HCT116 (cell line): ENCODE measurements at regions of chr2 and their contacts with region 1.

Region 1: GRCh38 chr2:229586746-229587705 is 127.3 kb downstream of the DNER start:
- DNase-seq: peak; percentile 76
- ATAC-seq: peak; percentile 93
- H3K4me3 ChIP-seq: peak overlapping the region; percentile 38 to 53
- H3K27ac ChIP-seq: no peak overlapping the region
- H3K4me1 ChIP-seq: peaks cover 4 to 21% of the 10 kb centered on the region in 2 experiments; a peak in 3 of 4 replicates
- H3K27me3 ChIP-seq: no peaks in the 10 kb centered on the region
- CTCF ChIP-seq: peak; percentile 84 to 91 (median 84)
- POLR2A ChIP-seq: no peak
- RAD21 ChIP-seq: peak; percentile 96

Region 2: DNA sequence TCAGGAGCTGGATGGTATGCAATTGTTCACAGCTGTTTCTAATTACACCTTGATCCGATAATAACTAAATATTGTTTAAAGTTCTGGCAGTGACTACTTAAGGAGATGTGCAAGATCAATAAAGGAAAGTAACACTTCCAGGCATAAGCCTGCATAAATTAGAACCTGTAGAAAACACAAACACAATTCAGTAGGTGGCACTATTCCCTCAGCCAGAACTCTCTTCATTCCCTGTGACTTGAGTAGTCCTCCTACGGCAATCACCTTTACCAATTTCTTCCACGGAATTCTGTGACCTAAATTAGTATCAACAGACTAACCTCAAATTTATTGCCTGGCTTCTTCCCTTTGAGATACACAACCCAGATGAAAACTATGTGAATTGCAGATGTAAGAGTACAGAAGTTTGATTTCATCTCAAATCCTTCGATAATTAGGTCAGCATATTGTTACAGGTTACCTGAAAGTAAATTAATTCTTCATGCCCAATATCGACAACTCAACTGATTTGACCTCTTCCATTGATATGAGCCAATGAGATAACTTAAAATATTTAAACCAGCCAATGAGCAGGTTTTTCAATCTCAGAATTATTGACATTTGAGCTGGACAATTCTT is 453.8 kb before region 1 on chr2:
- CTCF ChIA-PET with region 1: interaction called, 11 read pairs
- POLR2A ChIA-PET with region 1: no interaction called
- RAD21 ChIA-PET with region 1: no interaction called
- intact Hi-C with region 1: loop called (anchors 1 kb)
- DNase-seq: peak; percentile 50
- ATAC-seq: peak; percentile 91
- H3K4me3 ChIP-seq: no peak overlapping the region
- H3K27ac ChIP-seq: no peak overlapping the region
- H3K4me1 ChIP-seq: no peaks in the 10 kb centered on the region
- H3K27me3 ChIP-seq: no peaks in the 10 kb centered on the region
- CTCF ChIP-seq: peak; percentile 51 to 67 (median 62)
- POLR2A ChIP-seq: no peak
- RAD21 ChIP-seq: peak; percentile 87

Region 3: DNA sequence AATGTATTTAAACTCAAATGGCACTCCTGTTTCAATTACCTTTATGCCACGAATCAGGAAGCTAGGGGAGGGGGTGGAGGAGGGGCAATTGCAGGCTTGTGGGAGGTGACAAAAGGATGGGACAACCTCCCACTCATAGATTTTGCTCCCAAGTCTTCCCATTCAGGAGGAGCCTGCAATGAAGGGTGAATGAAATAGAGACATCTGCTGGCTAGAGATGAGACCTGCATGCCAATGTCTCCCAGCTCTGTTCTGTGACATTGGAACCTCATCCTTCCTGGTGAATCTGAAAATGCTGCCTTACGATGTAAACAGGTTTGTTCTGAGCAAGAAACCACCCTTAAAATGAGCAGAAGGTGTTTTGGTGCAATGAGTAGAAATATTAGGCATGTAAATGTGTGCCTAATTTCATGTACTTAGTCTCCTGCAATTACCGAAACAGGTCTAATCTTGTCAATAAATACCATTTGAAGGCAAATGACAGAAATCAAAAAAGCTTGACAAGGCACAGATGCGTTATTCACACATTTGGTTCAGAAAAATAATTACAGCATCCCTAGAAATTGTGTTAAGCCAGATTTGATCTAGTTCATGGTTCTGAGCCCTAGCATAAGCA is 313.2 kb before region 1 on chr2:
- CTCF ChIA-PET with region 1: interaction called, 17 read pairs
- POLR2A ChIA-PET with region 1: interaction called, 3 read pairs
- RAD21 ChIA-PET with region 1: no interaction called
- intact Hi-C with region 1: loop called (anchors 2 kb)
- DNase-seq: peak; percentile 81
- ATAC-seq: peak; percentile 99
- H3K4me3 ChIP-seq: peak overlapping the region in 1 of 2 experiments; percentile 18; a peak in 1 of 4 replicates
- H3K27ac ChIP-seq: no peak overlapping the region
- H3K4me1 ChIP-seq: peaks cover 0 to 10% of the 10 kb centered on the region in 2 experiments; a peak in 3 of 4 replicates
- H3K27me3 ChIP-seq: no peaks in the 10 kb centered on the region
- CTCF ChIP-seq: peak; percentile 71 to 82 (median 79); a peak in 5 of 6 replicates
- POLR2A ChIP-seq: no peak
- RAD21 ChIP-seq: peak; percentile 78

Region 4: GRCh38 chr2:229342376-229342775 is 244.7 kb before region 1 on chr2:
- CTCF ChIA-PET with region 1: interaction called, 22 read pairs
- POLR2A ChIA-PET with region 1: no interaction called
- RAD21 ChIA-PET with region 1: interaction called in 1 of 2 experiments, 7 read pairs
- intact Hi-C with region 1: loop called (anchors 1 kb)
- DNase-seq: peak; percentile 26
- ATAC-seq: peak; percentile 93
- H3K4me3 ChIP-seq: no peak overlapping the region
- H3K27ac ChIP-seq: no peak overlapping the region
- H3K4me1 ChIP-seq: no peaks in the 10 kb centered on the region
- H3K27me3 ChIP-seq: no peaks in the 10 kb centered on the region; the same call in 1 of the 2 replicates
- CTCF ChIP-seq: peak; percentile 73 to 85 (median 84); a peak in 5 of 6 replicates
- POLR2A ChIP-seq: no peak
- RAD21 ChIP-seq: peak; percentile 83

Region 5: DNA sequence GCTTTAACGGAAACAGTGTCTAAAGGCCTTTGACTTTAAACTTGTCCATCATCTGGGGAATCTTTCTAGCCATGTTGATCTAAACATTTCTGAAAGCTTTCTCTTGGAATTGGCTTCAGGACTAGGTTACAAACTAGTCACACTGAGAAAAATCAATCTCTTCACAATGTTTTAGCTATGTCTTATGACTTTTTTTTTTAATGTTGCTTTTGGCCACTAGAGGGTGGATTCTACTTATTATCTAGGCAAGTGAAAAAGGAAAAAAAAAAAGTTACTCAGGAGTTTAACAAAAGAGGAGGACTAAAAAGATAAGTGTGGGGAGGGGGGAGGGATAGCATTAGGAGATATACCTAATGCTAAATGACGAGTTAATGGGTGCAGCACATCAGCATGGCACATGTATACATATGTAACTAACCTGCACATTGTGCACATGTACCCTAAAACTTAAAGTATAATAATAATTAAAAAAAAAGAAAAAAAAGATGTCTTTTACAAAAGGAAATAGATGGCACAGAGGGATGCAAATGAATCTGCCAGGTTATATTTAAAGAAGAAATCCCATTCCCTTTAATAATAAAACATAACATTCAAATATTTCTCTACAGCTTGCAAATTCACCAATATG is 155.6 kb before region 1 on chr2:
- CTCF ChIA-PET with region 1: interaction called, 25 read pairs
- POLR2A ChIA-PET with region 1: no interaction called
- RAD21 ChIA-PET with region 1: interaction called, 4 to 7 read pairs
- intact Hi-C with region 1: loop called (anchors 1 kb)
- DNase-seq: peak; percentile 57
- ATAC-seq: peak; percentile 68
- H3K4me3 ChIP-seq: no peak overlapping the region
- H3K27ac ChIP-seq: no peak overlapping the region
- H3K4me1 ChIP-seq: no peaks in the 10 kb centered on the region
- H3K27me3 ChIP-seq: no peaks in the 10 kb centered on the region
- CTCF ChIP-seq: peak; percentile 39 to 65 (median 61); a peak in 5 of 6 replicates
- POLR2A ChIP-seq: no peak
- RAD21 ChIP-seq: peak; percentile 72

Region 6: DNA sequence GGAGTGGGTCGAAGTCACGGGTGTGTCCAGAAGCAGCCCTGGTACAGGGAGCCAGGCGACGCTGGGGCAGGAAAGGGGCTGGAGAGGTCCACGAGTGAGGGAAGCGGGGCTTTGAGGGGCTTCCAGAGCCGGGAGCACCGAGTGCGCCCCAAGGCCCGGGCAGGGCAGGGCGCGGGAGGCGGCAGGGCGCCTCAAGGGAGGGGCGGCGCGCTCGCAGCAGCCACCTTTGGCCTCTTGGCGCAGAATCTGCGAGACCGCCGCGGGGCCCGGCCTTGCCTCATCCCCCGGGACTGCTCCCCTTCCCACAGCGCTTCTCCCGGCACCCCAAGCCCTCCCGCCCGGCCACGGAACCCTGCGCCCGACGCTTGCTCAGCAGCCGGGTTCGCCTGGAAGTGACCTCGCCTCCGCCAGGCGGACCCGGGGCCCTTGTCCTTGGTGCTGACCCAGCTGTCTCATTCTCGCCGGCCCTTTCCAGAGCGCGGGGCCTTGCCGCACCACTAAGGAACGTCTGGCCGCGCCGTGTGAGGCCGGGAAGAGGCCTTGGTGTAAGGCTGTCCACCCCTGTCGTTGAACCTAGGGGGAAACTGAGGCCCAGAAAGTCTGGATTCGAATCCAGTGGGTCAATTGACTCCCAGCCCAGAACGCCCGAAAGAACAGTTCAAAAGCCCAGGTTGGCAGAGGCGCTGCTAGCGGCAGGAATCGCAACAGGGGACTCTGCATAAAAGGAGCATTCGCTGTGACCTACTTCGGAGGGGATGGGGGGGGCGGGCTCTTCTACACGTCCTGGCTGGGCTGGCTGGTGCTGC is 127.9 kb after region 1 on chr2:
- CTCF ChIA-PET with region 1: no interaction called
- POLR2A ChIA-PET with region 1: no interaction called
- RAD21 ChIA-PET with region 1: no interaction called
- intact Hi-C with region 1: loop called (anchors 5 kb)
- DNase-seq: no peak
- ATAC-seq: peak; percentile 50
- H3K4me3 ChIP-seq: peak overlapping the region; percentile 19 to 33; a peak in 3 of 4 replicates
- H3K27ac ChIP-seq: no peak overlapping the region
- H3K4me1 ChIP-seq: peaks cover 0 to 11% of the 10 kb centered on the region in 2 experiments; a peak in 2 of 4 replicates
- H3K27me3 ChIP-seq: peaks cover 25% of the 10 kb centered on the region
- CTCF ChIP-seq: no peak
- POLR2A ChIP-seq: no peak
- RAD21 ChIP-seq: no peak